Activated CD4-positive, alpha-beta memory T cell treated with anti-CD3 and anti-CD28 coated beads for 36 hours (primary cell): ENCODE measurements at regions of chr15 and their contacts with region 1.

Region 1: DNA sequence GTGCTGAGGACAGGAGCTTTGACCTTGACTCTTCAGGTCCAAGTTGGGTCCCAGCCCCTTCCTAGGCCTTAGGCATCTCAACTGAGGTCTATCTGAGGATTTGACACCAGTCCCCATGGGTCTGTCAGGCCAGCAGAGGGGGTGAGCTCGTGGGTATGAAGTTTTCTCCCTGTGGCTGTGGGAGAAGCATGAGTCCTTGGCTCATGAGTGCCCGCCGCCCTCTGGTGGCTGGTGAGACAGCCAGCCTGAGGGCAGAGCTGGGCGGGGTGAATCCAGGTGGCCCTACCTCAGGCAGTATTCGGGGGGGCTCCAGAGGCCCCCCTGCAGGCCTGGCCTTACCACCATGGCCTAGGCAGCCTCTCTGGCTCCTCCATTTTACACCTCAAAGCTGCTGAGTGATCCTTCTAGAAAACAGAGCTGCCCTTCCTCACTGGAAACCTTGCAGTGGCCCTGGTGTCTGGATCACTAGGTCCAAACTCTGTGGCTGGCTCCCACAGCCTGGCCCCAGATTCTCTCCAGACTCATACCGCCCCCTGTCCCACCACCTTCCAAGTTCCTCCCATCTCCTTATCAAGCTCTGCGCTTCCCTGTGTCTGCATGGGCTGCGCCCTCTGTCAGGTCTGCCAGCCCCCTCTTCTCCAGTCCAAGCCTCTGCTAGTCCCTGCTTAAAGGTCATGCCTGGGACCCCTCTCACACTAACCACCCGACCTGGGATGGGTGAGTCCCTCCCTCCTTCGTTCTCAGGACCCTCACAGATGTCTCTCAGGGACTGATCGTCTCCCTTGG is 16.1 kb downstream of the SH2D7 start:
- DNase-seq: peak; percentile 88
- H3K4me3 Mint-ChIP-seq: no peak overlapping the region
- H3K27ac Mint-ChIP-seq: no peak overlapping the region
- H3K4me1 Mint-ChIP-seq: peaks cover 31% of the 10 kb centered on the region
- H3K27me3 Mint-ChIP-seq: no peaks in the 10 kb centered on the region

Region 2: GRCh38 chr15:77959432-77959879 is 149.0 kb before region 1 on chr15:
- CTCF ChIA-PET with region 1: interaction called, 140 read pairs
- POLR2A ChIA-PET with region 1: interaction called, 3 read pairs
- intact Hi-C with region 1: loop called (anchors 2 kb)
- DNase-seq: peak; percentile 87
- H3K4me3 Mint-ChIP-seq: peak overlapping the region; percentile 30
- H3K27ac Mint-ChIP-seq: no peak overlapping the region
- H3K4me1 Mint-ChIP-seq: peaks cover 7% of the 10 kb centered on the region
- H3K27me3 Mint-ChIP-seq: peaks cover 8% of the 10 kb centered on the region

Region 3: DNA sequence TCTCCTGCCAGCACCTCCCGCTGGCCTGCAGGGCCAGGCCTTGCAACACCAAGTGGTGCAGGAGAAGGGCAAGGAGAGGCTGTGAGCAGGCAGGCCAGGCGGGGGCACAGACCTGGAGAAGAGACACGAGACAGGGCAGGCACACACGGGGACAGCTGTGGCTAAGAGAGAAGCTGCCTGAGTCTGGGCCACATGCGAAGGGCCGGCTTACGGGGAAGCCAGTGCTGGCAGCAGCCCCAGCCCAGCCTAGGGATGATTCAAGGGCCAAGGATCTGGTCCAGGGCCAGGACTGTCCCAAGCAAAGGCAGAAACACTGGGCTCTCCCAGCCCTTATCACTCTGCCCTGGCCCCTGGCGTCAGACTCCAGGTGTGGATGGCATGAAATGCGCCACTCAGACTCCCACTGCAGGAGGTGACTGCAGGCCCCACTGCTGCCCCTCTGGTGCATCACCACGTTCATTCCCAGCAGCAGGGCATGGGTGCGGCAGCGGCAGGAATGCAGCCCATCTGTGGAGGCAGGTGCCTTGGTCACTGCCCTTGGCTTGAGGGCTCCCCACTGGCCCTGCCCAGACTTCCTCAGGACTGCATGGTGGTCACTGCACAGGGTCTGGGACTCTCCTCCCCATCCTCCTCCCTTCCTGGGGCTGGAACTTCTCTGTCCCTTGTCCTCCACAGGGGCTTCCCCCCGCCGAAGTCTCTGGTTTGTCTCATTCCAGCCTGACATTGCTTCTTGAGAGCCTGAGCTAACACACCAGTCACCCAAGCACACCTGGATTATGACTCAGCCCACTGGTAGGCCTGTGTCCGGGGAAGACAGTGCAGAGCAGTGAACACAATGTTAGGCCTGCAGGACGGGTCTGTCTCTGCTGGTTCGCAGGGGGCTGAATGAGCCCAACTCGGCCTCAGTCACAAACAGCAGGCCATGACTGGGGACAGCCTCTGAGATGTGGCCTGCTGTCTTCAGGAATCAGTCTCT is 100.3 kb before region 1 on chr15:
- CTCF ChIA-PET with region 1: interaction called, 34 read pairs
- POLR2A ChIA-PET with region 1: no interaction called
- intact Hi-C with region 1: no loop called
- DNase-seq: no peak
- H3K4me3 Mint-ChIP-seq: no peak overlapping the region
- H3K27ac Mint-ChIP-seq: no peak overlapping the region
- H3K4me1 Mint-ChIP-seq: peaks cover 18% of the 10 kb centered on the region
- H3K27me3 Mint-ChIP-seq: no peaks in the 10 kb centered on the region

Region 4: DNA sequence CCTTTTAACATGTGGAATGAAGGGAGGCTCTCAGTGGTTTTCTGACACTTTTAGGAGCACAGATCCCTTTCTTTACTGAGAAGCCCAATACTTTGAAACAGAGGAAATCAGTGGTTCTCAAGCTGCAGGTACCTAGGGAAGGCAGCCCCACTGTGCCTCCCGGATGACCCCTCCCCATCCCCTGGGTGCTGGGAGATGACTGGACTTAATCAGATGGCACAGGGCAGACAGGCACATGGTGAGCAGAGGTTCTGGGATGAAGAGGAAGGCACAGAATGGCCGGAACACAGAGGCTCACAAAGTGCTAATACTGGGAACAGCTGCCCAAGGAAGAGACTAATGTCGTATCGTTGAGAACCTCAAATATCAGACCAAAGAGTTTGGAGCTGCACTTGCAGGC is 66.0 kb before region 1 on chr15:
- CTCF ChIA-PET with region 1: interaction called, 17 read pairs
- POLR2A ChIA-PET with region 1: interaction called, 3 read pairs
- intact Hi-C with region 1: no loop called
- DNase-seq: no peak
- H3K4me3 Mint-ChIP-seq: no peak overlapping the region
- H3K27ac Mint-ChIP-seq: peak overlapping the region; percentile 42
- H3K4me1 Mint-ChIP-seq: peaks cover 89% of the 10 kb centered on the region
- H3K27me3 Mint-ChIP-seq: no peaks in the 10 kb centered on the region

Region 5: GRCh38 chr15:78077058-78077877 is 31.2 kb before region 1 on chr15 and contains the start of gene TBC1D2B:
- CTCF ChIA-PET with region 1: interaction called, 15 read pairs
- POLR2A ChIA-PET with region 1: no interaction called
- intact Hi-C with region 1: loop called (anchors 2 kb)
- DNase-seq: peak; percentile 79
- H3K4me3 Mint-ChIP-seq: peak within 1 kb of the TSS; percentile 91
- H3K27ac Mint-ChIP-seq: peak within 1 kb of the TSS; percentile 82
- H3K4me1 Mint-ChIP-seq: peaks cover 51% of the 10 kb centered on the region
- H3K27me3 Mint-ChIP-seq: no peaks in the 10 kb centered on the region
- total RNA-seq, gene TBC1D2B: 47.9 to 57.8 TPM

Region 6: DNA sequence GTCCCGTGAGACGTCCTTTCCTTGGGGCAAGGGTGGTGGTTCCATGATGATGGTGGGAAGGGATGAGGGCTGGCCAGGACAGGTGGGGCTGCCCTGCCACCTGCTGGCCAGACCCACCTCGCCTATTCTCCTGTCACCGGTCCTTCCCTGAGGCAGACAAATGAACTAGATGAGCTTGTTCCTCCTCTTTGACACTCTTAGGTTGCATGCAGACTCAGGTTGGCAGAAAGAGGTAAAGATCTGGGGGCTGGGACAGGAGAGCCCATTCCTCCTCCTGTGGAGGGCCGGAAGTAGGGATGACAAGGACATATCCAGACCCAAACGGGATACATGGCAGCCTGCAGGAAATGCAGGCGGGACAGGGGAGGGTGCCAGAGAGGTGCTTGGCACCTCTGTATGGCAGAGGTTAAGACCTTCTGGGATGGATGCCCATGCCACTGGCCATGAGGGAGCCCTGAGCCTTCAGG is 87.3 kb after region 1 on chr15:
- CTCF ChIA-PET with region 1: interaction called, 76 read pairs
- POLR2A ChIA-PET with region 1: interaction called, 3 read pairs
- intact Hi-C with region 1: loop called (anchors 1 kb)
- DNase-seq: peak; percentile 60
- H3K4me3 Mint-ChIP-seq: no peak overlapping the region
- H3K27ac Mint-ChIP-seq: no peak overlapping the region
- H3K4me1 Mint-ChIP-seq: no peaks in the 10 kb centered on the region
- H3K27me3 Mint-ChIP-seq: no peaks in the 10 kb centered on the region